ENCODE measurements at regions of chr6 and their contacts with region 1.

Region 1: DNA sequence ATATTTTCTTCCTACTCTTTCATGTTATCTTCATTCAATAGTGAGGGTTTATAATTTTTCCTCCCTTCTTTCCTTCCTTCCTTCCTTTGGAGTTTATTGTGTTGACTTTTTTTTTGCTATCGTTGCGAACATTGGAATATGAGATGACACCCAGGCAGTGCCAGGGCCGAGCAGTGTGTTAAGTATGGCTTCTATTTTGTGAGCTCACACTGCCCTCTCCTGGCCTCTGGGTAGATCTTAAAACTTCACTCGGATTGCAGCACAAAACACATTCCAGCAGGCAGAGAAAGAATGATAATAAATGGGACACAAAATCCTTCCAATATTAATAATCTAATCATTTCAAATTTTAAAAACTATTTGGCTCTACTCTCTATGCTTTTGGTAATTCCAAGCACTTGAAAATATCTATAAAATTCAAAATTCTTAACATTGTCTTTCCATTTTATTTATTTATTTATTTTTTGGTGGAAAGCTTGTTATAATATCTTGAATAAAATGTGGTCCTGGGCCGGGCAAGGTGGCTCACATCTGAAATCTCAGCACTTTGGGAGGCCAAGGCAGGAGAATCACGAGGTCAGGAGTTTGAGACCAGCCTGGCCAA is 147.4 kb upstream of the OLIG3 start:
- DNase-seq: peak; percentile 87
- H3K4me3 Mint-ChIP-seq: no peak overlapping the region
- H3K27ac Mint-ChIP-seq: no peak overlapping the region
- H3K4me1 Mint-ChIP-seq: peaks cover 16% of the 10 kb centered on the region
- H3K27me3 Mint-ChIP-seq: no peaks in the 10 kb centered on the region
- CTCF ChIP-seq: peak; percentile 80

Region 2: DNA sequence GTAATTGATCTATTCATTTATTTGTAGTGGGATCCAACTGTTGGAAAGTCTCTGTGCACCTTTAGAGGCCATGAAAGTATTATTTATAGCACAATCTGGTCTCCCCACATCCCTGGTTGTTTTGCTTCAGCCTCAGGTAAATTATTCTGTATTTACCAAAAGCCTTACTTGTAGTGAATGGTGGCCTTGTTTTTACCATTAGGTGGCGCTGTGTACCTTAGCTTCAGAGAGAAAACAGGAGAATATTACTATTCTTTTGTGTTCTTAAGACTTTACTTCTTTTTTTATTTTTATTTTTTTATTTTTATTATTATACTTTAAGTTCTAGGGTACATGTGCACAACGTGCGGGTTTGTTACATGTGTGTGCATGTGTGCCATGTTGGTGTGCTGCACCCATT is 795.5 kb before region 1 on chr6:
- CTCF ChIA-PET with region 1: no interaction called
- POLR2A ChIA-PET with region 1: no interaction called
- intact Hi-C with region 1: loop called (anchors 5 kb)
- DNase-seq: peak; percentile 63
- H3K4me3 Mint-ChIP-seq: no peak overlapping the region
- H3K27ac Mint-ChIP-seq: no peak overlapping the region
- H3K4me1 Mint-ChIP-seq: peaks cover 9% of the 10 kb centered on the region
- H3K27me3 Mint-ChIP-seq: no peaks in the 10 kb centered on the region
- CTCF ChIP-seq: peak; percentile 53

Region 3: DNA sequence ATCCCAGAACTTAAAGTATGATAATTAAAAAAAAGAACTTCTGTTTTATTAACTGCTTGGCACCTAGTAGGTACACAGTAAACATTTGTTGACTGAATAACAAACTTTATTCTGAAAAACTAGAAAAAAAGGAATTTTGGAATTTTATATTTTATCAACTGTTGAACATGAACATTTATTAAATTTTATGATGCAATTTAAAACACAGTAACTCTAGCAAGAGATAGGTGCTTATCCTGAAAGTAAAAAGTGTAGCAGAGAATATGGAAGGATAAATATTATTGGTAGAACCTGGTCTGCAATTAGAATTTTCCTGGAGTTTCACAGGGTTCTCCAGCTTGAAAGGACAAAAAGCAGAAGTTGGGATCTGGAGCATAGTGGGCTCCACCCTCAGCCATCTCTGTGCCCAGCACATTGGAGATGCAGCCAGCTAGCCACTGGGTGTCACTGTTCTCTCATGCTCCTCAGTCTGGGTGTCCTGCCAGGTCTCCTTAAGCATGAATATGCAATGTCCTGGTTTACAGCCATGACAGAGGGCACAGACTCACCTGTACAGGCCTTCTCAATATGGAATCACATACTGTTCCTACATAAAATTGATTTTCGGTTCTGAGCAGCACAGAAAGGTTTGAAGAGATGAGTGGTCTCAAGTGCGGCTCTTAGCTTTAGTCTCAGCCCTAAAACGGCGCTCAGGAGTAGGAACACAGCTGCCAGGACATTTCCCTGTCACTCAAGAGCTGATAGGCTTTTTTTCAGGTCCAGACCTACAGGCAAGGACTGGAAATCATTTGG is 565.1 kb before region 1 on chr6:
- CTCF ChIA-PET with region 1: no interaction called
- POLR2A ChIA-PET with region 1: interaction called, 4 read pairs
- intact Hi-C with region 1: loop called (anchors 1 kb)
- DNase-seq: peak; percentile 86
- H3K4me3 Mint-ChIP-seq: no peak overlapping the region
- H3K27ac Mint-ChIP-seq: no peak overlapping the region
- H3K4me1 Mint-ChIP-seq: no peaks in the 10 kb centered on the region
- H3K27me3 Mint-ChIP-seq: no peaks in the 10 kb centered on the region
- CTCF ChIP-seq: peak; percentile 68

Region 4: DNA sequence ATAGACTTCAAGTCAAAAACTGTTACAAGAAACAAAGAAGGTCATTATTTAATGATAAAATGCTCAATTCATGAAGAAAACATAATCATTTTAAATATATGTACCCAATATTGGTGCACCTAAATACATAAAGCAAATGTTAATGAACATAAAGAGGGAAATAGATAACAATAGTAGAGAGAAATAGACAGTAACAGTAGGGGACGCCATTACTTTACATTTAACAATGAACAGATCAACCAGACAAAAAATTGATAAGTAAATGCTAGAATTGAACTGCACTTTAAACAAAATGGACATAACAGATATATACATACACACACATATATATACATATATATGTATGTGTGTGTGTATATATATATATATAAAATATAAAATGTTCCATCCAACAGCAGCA is 505.5 kb before region 1 on chr6:
- CTCF ChIA-PET with region 1: no interaction called
- POLR2A ChIA-PET with region 1: interaction called, 4 read pairs
- intact Hi-C with region 1: loop called (anchors 1 kb)
- DNase-seq: peak; percentile 43
- H3K4me3 Mint-ChIP-seq: no peak overlapping the region
- H3K27ac Mint-ChIP-seq: no peak overlapping the region
- H3K4me1 Mint-ChIP-seq: peaks cover 10% of the 10 kb centered on the region
- H3K27me3 Mint-ChIP-seq: no peaks in the 10 kb centered on the region
- CTCF ChIP-seq: peak; percentile 54

Region 5: GRCh38 chr6:137271245-137272183 is 370.1 kb before region 1 on chr6:
- CTCF ChIA-PET with region 1: interaction called, 22 read pairs
- POLR2A ChIA-PET with region 1: interaction called, 3 read pairs
- intact Hi-C with region 1: loop called (anchors 1 kb)
- DNase-seq: peak; percentile 71
- H3K4me3 Mint-ChIP-seq: no peak overlapping the region
- H3K27ac Mint-ChIP-seq: no peak overlapping the region
- H3K4me1 Mint-ChIP-seq: peaks cover 19% of the 10 kb centered on the region
- H3K27me3 Mint-ChIP-seq: no peaks in the 10 kb centered on the region
- CTCF ChIP-seq: peak; percentile 81